MCF 10A (cell line): ENCODE measurements at regions of chr5 and their contacts with region 1.

Region 1: GRCh38 chr5:132963175-132964104 is at the start of gene AFF4:
- DNase-seq: peak; percentile 98
- H3K4me3 Mint-ChIP-seq: peak within 1 kb of the TSS; percentile 95
- H3K27ac Mint-ChIP-seq: peak within 1 kb of the TSS; percentile 100
- H3K4me1 Mint-ChIP-seq: peaks cover 17% of the 10 kb centered on the region
- H3K27me3 Mint-ChIP-seq: no peaks in the 10 kb centered on the region
- CTCF ChIP-seq: no peak
- total RNA-seq, gene AFF4: 200 and 206 TPM in 2 replicates

Region 2: GRCh38 chr5:132905867-132906295 is 57.6 kb before region 1 on chr5:
- CTCF ChIA-PET with region 1: interaction called, 5 read pairs
- POLR2A ChIA-PET with region 1: interaction called, 11 read pairs
- intact Hi-C with region 1: no loop called
- DNase-seq: peak; percentile 54
- H3K4me3 Mint-ChIP-seq: no peak overlapping the region
- H3K27ac Mint-ChIP-seq: peak overlapping the region; percentile 1
- H3K4me1 Mint-ChIP-seq: peaks cover 17% of the 10 kb centered on the region
- H3K27me3 Mint-ChIP-seq: no peaks in the 10 kb centered on the region
- CTCF ChIP-seq: no peak

Region 3: DNA sequence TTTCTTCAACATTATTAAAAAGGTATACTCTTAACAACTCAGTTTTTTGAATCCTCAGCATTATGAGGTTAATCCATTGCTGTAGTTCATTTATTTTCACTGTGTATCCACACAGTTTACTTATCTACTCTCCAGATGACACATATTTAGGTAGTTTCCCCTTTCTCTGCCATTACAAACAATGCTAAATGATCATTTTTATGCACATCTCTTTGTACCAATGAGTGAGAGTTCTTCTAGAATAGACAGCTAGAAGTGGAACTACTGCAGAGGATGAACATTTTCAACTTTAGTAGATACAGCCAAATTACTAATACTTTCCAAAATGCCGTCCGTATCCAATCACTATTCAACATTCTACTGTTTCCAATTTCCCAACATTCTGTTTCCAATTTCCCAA is 11.5 kb before region 1 on chr5:
- CTCF ChIA-PET with region 1: interaction called, 6 read pairs
- POLR2A ChIA-PET with region 1: interaction called, 15 read pairs
- intact Hi-C with region 1: no loop called
- DNase-seq: no peak
- H3K4me3 Mint-ChIP-seq: no peak overlapping the region
- H3K27ac Mint-ChIP-seq: no peak overlapping the region
- H3K4me1 Mint-ChIP-seq: peaks cover 34% of the 10 kb centered on the region
- H3K27me3 Mint-ChIP-seq: no peaks in the 10 kb centered on the region
- CTCF ChIP-seq: no peak

Region 4: GRCh38 chr5:133015466-133015865 is 52.0 kb after region 1 on chr5:
- CTCF ChIA-PET with region 1: interaction called, 4 read pairs
- POLR2A ChIA-PET with region 1: interaction called, 34 read pairs
- intact Hi-C with region 1: no loop called
- DNase-seq: no peak
- H3K4me3 Mint-ChIP-seq: no peak overlapping the region
- H3K27ac Mint-ChIP-seq: no peak overlapping the region
- H3K4me1 Mint-ChIP-seq: no peaks in the 10 kb centered on the region
- H3K27me3 Mint-ChIP-seq: no peaks in the 10 kb centered on the region
- CTCF ChIP-seq: no peak

Region 5: DNA sequence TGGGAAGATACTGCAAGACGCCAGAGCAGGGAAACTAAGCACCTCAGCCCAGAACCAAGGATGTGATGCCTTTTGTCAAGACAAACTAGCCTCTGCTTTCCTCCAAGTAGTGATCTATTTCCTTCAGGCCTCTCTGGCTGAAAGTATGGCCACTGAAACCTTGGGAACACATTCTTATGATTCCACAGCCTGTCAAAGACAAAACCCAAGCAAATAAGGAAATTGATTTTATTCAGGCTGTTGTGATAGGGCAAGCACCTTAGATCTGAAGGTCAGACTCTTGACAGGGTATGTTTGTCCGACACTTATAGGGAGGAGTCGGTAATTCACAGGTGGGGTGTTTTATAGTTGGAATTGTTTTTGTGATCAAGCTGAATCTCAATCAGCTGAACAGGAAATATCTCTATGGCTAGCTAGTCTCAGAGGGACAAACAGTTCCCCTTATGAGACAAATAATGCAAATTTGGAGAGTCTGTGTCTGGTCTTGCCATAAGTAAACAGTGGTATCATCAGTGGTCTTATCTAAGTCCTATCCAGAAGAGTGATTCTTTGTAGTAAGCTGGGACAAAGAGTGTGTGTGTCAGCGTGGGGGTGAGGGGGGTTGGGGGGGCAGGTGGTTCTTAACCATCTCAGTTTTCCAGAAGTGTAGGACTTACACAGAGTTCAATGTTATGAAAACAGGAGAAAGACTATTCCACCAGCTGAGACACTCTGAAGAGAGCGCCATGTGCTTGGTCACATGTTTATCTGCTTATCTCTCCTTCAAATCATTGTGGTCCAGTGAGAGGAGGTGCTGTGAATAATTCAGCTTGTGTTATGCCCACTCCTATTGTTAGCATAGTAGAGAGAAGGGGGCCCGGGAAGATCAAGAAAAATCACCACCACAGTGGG is 69.7 kb after region 1 on chr5:
- CTCF ChIA-PET with region 1: no interaction called
- POLR2A ChIA-PET with region 1: interaction called, 41 read pairs
- intact Hi-C with region 1: no loop called
- DNase-seq: no peak
- H3K4me3 Mint-ChIP-seq: no peak overlapping the region
- H3K27ac Mint-ChIP-seq: no peak overlapping the region
- H3K4me1 Mint-ChIP-seq: no peaks in the 10 kb centered on the region
- H3K27me3 Mint-ChIP-seq: no peaks in the 10 kb centered on the region
- CTCF ChIP-seq: no peak

Region 6: GRCh38 chr5:133051580-133052332 is 88.3 kb after region 1 on chr5 and contains the start of gene HSPA4:
- CTCF ChIA-PET with region 1: interaction called, 5 read pairs
- POLR2A ChIA-PET with region 1: interaction called, 311 read pairs
- intact Hi-C with region 1: loop called (anchors 1 kb)
- DNase-seq: peak; percentile 100
- H3K4me3 Mint-ChIP-seq: peak within 1 kb of the TSS; percentile 95
- H3K27ac Mint-ChIP-seq: peak within 1 kb of the TSS; percentile 99
- H3K4me1 Mint-ChIP-seq: peaks cover 32% of the 10 kb centered on the region
- H3K27me3 Mint-ChIP-seq: no peaks in the 10 kb centered on the region
- CTCF ChIP-seq: no peak
- total RNA-seq, gene HSPA4: 173 and 218 TPM in 2 replicates